ENCODE measurements at regions of chr14 and their contacts with region 1.

Region 1: GRCh38 chr14:92737206-92737605 is 11.2 kb downstream of the LGMN start:
- DNase-seq: no peak
- ATAC-seq: no peak
- H3K4me3 ChIP-seq: no peak overlapping the region
- H3K27ac ChIP-seq: no peak overlapping the region
- H3K4me1 ChIP-seq: no peaks in the 10 kb centered on the region
- H3K27me3 ChIP-seq: peaks cover 21% of the 10 kb centered on the region
- CTCF ChIP-seq: no peak
- POLR2A ChIP-seq: no peak
- RAD21 ChIP-seq: no peak

Region 2: GRCh38 chr14:92890830-92891588 is 153.8 kb after region 1 on chr14:
- CTCF ChIA-PET with region 1: no interaction called
- POLR2A ChIA-PET with region 1: no interaction called
- dilution Hi-C with region 1: no loop called
- in situ Hi-C with region 1: no loop called
- intact Hi-C with region 1: no loop called
- DNase-seq: no peak
- ATAC-seq: no peak
- H3K4me3 ChIP-seq: no peak overlapping the region
- H3K27ac ChIP-seq: no peak overlapping the region
- H3K4me1 ChIP-seq: no peaks in the 10 kb centered on the region
- H3K27me3 ChIP-seq: peaks cover 1% of the 10 kb centered on the region; the same call in 1 of the 2 replicates
- CTCF ChIP-seq: no peak
- POLR2A ChIP-seq: no peak
- RAD21 ChIP-seq: no peak

Region 3: GRCh38 chr14:94612174-94612573 is 1875.0 kb after region 1 on chr14 and contains the start of gene SERPINA3:
- CTCF ChIA-PET with region 1: no interaction called
- POLR2A ChIA-PET with region 1: interaction called, 11 read pairs
- dilution Hi-C with region 1: no loop called
- in situ Hi-C with region 1: no loop called
- intact Hi-C with region 1: no loop called
- DNase-seq: peak; percentile 7
- ATAC-seq: no peak; the same call in 1 of the 2 replicates
- H3K4me3 ChIP-seq: no peak within 1 kb of the TSS
- H3K27ac ChIP-seq: peak within 1 kb of the TSS; percentile 75; the same call in 1 of the 2 replicates
- H3K4me1 ChIP-seq: peaks cover 14% of the 10 kb centered on the region
- H3K27me3 ChIP-seq: no peaks in the 10 kb centered on the region
- CTCF ChIP-seq: no peak
- POLR2A ChIP-seq: no peak
- RAD21 ChIP-seq: no peak
- total RNA-seq, gene SERPINA3: under 0.01 and 0.36 TPM in 2 replicates